Activated T-helper 2 cell treated with anti-CD3 and anti-CD28 coated beads, Interferon-gamma antibody, Interleukin-2, Interleukin-4, amounts not matched to agents 10 μg/mL and 5 μg/mL and 100 μg/mL, durations not matched to agents 14 hours and 24 hours and 36 hours (primary cell): ENCODE measurements at regions of chr6 and their contacts with region 1.

Region 1: GRCh38 chr6:26520853-26521599 is 17.1 kb upstream of the HMGN4 start:
- DNase-seq: peak; percentile 78
- H3K4me3 Mint-ChIP-seq: peak overlapping the region; percentile 82
- H3K27ac Mint-ChIP-seq: peak overlapping the region; percentile 83
- H3K4me1 Mint-ChIP-seq: peaks cover 39% of the 10 kb centered on the region
- H3K27me3 Mint-ChIP-seq: peaks cover 2% of the 10 kb centered on the region

Region 2: DNA sequence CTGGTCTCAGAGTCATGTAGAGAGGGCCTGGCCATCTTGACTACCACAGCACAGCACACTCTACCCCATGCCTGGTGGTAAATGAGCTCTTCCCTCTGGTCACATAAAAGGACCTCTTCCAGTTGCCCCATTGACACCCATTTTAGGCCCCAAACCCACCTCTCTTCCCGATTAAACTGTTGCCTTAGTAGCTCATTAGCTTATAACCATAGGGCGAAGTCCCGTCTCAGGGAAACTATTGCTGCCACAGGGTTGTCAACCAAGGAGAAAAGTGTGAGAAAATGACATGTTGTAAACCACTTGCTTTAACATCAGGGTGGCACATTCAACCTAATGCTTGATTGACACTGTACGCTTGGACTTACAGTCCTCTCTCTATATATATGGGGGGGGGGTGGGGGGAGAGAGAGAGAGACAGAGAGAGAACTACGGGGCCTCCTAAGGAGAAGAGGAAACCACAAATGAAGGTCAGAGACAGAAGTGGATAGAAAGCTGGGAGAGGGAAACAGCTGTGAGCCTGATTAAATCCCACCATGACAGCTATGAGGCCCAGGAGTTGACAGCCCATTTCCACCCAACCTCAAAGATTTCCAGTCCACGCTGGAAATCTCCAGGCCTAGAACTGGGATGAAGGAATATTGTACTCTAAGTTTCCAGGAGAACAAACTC is 35.8 kb before region 1 on chr6:
- intact Hi-C with region 1: no loop called
- DNase-seq: no peak
- H3K4me3 Mint-ChIP-seq: no peak overlapping the region
- H3K27ac Mint-ChIP-seq: no peak overlapping the region
- H3K4me1 Mint-ChIP-seq: peaks cover 3% of the 10 kb centered on the region
- H3K27me3 Mint-ChIP-seq: no peaks in the 10 kb centered on the region

Region 3: GRCh38 chr6:26532699-26533531 is 11.9 kb after region 1 on chr6:
- intact Hi-C with region 1: loop called (anchors 1 kb)
- DNase-seq: peak; percentile 86
- H3K4me3 Mint-ChIP-seq: peak overlapping the region; percentile 95
- H3K27ac Mint-ChIP-seq: peak overlapping the region; percentile 94
- H3K4me1 Mint-ChIP-seq: peaks cover 35% of the 10 kb centered on the region
- H3K27me3 Mint-ChIP-seq: no peaks in the 10 kb centered on the region

Region 4: GRCh38 chr6:26568601-26569432 is 47.8 kb after region 1 on chr6:
- intact Hi-C with region 1: loop called (anchors 5 kb)
- DNase-seq: peak; percentile 95
- H3K4me3 Mint-ChIP-seq: peak overlapping the region; percentile 93
- H3K27ac Mint-ChIP-seq: peak overlapping the region; percentile 78
- H3K4me1 Mint-ChIP-seq: peaks cover 32% of the 10 kb centered on the region
- H3K27me3 Mint-ChIP-seq: no peaks in the 10 kb centered on the region

Region 5: GRCh38 chr6:26754212-26754611 is 233.2 kb after region 1 on chr6:
- intact Hi-C with region 1: no loop called
- DNase-seq: no peak
- H3K4me3 Mint-ChIP-seq: no peak overlapping the region
- H3K27ac Mint-ChIP-seq: no peak overlapping the region
- H3K4me1 Mint-ChIP-seq: no peaks in the 10 kb centered on the region
- H3K27me3 Mint-ChIP-seq: peaks cover 28% of the 10 kb centered on the region